ENCODE measurements at regions of chr5 and their contacts with region 1.

Region 1: DNA sequence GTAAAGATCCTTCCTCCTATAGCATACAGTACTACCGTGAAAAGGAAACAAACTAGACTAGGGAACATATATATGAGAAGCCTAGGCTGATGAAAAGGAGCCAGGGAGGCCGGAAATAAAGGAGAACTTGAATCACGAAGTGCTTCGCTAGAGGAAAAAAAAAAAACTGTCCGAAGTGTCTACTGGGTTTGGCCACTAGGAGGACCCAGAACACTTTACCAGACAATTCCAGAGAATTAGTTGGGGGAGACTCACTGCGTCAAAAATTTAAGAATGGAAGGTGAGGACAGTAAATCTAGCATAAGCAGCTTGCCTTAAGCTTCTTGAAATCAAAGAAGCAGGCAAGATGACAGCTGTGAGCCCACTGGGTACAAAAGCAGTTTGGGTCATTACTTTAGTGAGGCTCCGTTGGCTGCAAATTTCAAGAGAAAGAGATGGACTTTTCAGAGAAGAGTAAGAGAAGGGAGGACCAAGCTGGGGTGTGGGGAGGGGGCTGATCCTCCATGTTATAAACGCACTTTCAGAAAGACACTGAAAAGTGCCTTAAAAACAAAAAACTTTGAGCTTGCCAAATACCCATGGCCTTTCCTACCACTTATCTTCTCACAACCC is 47.4 kb downstream of the P4HA2 start:
- DNase-seq: peak; percentile 82
- H3K4me3 Mint-ChIP-seq: no peak overlapping the region
- H3K27ac Mint-ChIP-seq: no peak overlapping the region
- H3K4me1 Mint-ChIP-seq: peaks cover 16% of the 10 kb centered on the region
- H3K27me3 Mint-ChIP-seq: no peaks in the 10 kb centered on the region
- CTCF ChIP-seq: peak; percentile 89

Region 2: GRCh38 chr5:132190161-132190817 is 10.0 kb after region 1 on chr5:
- CTCF ChIA-PET with region 1: interaction called, 68 read pairs
- POLR2A ChIA-PET with region 1: interaction called, 7 read pairs
- intact Hi-C with region 1: no loop called
- DNase-seq: peak; percentile 85
- H3K4me3 Mint-ChIP-seq: no peak overlapping the region
- H3K27ac Mint-ChIP-seq: no peak overlapping the region
- H3K4me1 Mint-ChIP-seq: peaks cover 9% of the 10 kb centered on the region
- H3K27me3 Mint-ChIP-seq: no peaks in the 10 kb centered on the region
- CTCF ChIP-seq: peak; percentile 55

Region 3: GRCh38 chr5:132220491-132220890 is 40.3 kb after region 1 on chr5:
- CTCF ChIA-PET with region 1: interaction called, 18 read pairs
- POLR2A ChIA-PET with region 1: interaction called, 3 read pairs
- intact Hi-C with region 1: no loop called
- DNase-seq: no peak
- H3K4me3 Mint-ChIP-seq: no peak overlapping the region
- H3K27ac Mint-ChIP-seq: no peak overlapping the region
- H3K4me1 Mint-ChIP-seq: peaks cover 38% of the 10 kb centered on the region
- H3K27me3 Mint-ChIP-seq: no peaks in the 10 kb centered on the region
- CTCF ChIP-seq: no peak

Region 4: DNA sequence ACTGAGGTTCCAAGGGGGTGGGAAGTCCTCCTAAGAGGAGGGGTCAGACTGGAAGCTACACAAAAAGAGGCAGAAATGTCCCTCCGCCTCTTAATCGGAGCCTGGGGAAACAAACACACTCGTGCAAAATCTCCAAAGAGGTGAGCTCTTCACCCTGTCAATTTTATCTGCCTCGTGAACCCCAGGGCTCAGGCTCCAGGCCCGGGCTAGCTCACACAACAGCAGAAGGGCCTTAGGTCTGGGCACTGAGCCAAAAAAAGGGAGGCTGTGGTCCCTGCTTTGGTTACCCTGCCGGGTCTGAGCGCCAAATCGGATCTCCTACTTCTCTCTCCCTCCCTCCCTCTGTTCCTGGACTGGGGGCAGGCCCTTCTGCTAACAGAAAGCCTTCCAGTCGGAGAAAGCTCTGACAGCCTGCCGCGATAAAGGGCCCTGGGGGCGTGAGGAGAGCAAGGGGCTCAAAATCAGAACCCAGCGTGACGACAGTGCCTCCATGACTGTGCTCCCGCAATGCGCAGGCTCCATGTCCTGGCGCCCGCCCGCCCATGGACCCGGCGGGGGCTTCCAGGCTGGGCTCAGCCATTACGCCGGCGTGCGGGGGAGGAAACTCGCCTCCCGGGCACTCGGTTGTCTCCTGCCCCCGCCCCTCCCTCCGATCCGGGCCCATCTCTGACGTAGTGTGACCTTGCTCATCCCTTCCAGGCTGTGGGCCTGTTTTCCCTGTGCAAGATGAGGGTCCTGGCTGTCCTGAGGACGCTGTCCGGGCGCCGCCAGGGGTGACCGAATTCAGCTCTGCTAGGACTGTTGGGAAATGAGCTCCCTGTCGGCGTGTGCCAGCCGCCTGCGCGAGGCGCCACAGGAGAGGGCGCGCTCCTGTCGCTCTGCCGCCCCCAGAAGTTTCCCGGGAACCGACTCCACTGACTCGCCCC is 113.1 kb after region 1 on chr5:
- CTCF ChIA-PET with region 1: interaction called, 18 read pairs
- POLR2A ChIA-PET with region 1: interaction called, 5 read pairs
- intact Hi-C with region 1: no loop called
- DNase-seq: peak; percentile 91
- H3K4me3 Mint-ChIP-seq: peak overlapping the region; percentile 98
- H3K27ac Mint-ChIP-seq: peak overlapping the region; percentile 89
- H3K4me1 Mint-ChIP-seq: peaks cover 40% of the 10 kb centered on the region
- H3K27me3 Mint-ChIP-seq: no peaks in the 10 kb centered on the region
- CTCF ChIP-seq: peak; percentile 19

Region 5: GRCh38 chr5:132386644-132387286 is 206.5 kb after region 1 on chr5:
- CTCF ChIA-PET with region 1: interaction called, 13 read pairs
- POLR2A ChIA-PET with region 1: interaction called, 4 read pairs
- intact Hi-C with region 1: loop called (anchors 1 kb)
- DNase-seq: peak; percentile 87
- H3K4me3 Mint-ChIP-seq: no peak overlapping the region
- H3K27ac Mint-ChIP-seq: peak overlapping the region; percentile 13
- H3K4me1 Mint-ChIP-seq: peaks cover 53% of the 10 kb centered on the region
- H3K27me3 Mint-ChIP-seq: no peaks in the 10 kb centered on the region
- CTCF ChIP-seq: peak; percentile 89

Region 6: GRCh38 chr5:132495667-132496190 is 315.5 kb after region 1 on chr5:
- CTCF ChIA-PET with region 1: interaction called, 13 read pairs
- POLR2A ChIA-PET with region 1: interaction called, 6 read pairs
- intact Hi-C with region 1: loop called (anchors 1 kb)
- DNase-seq: peak; percentile 92
- H3K4me3 Mint-ChIP-seq: peak overlapping the region; percentile 80
- H3K27ac Mint-ChIP-seq: peak overlapping the region; percentile 34
- H3K4me1 Mint-ChIP-seq: peaks cover 47% of the 10 kb centered on the region
- H3K27me3 Mint-ChIP-seq: no peaks in the 10 kb centered on the region
- CTCF ChIP-seq: no peak

Region 7: DNA sequence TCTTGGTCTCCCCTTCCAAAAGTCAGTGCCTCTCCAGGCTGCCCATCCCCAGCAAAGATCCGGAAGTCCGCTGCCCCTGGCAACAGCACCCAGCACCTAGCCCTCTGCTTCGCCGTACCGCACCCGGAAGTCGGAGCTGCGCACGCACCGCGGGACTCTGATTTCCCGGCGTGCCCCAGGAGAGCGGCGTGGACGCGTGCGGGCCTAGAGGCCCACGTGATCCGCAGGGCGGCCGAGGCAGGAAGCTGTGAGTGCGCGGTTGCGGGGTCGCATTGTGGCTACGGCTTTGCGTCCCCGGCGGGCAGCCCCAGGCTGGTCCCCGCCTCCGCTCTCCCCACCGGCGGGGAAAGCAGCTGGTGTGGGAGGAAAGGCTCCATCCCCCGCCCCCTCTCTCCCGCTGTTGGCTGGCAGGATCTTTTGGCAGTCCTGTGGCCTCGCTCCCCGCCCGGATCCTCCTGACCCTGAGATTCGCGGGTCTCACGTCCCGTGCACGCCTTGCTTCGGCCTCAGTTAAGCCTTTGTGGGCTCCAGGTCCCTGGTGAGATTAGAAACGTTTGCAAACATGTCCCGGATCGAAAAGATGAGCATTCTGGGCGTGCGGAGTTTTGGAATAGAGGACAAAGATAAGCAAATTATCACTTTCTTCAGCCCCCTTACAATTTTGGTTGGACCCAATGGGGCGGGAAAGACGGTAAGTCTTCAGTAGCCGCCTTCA is 376.7 kb after region 1 on chr5 and contains the start of gene RAD50:
- CTCF ChIA-PET with region 1: no interaction called
- POLR2A ChIA-PET with region 1: no interaction called
- intact Hi-C with region 1: no loop called
- DNase-seq: peak; percentile 97
- H3K4me3 Mint-ChIP-seq: peak within 1 kb of the TSS; percentile 97
- H3K27ac Mint-ChIP-seq: peak within 1 kb of the TSS; percentile 99
- H3K4me1 Mint-ChIP-seq: peaks cover 16% of the 10 kb centered on the region
- H3K27me3 Mint-ChIP-seq: no peaks in the 10 kb centered on the region
- CTCF ChIP-seq: no peak
- total RNA-seq, gene RAD50: 145 TPM in 2 replicates

Region 8: GRCh38 chr5:132947671-132948070 is 767.4 kb after region 1 on chr5:
- CTCF ChIA-PET with region 1: no interaction called
- POLR2A ChIA-PET with region 1: no interaction called
- intact Hi-C with region 1: no loop called
- DNase-seq: peak; percentile 6
- H3K4me3 Mint-ChIP-seq: no peak overlapping the region
- H3K27ac Mint-ChIP-seq: no peak overlapping the region
- H3K4me1 Mint-ChIP-seq: peaks cover 33% of the 10 kb centered on the region
- H3K27me3 Mint-ChIP-seq: no peaks in the 10 kb centered on the region
- CTCF ChIP-seq: no peak

Measured in MCF 10A (cell line).